ENCODE measurements at regions of chr2 and their contacts with region 1.

Region 1: DNA sequence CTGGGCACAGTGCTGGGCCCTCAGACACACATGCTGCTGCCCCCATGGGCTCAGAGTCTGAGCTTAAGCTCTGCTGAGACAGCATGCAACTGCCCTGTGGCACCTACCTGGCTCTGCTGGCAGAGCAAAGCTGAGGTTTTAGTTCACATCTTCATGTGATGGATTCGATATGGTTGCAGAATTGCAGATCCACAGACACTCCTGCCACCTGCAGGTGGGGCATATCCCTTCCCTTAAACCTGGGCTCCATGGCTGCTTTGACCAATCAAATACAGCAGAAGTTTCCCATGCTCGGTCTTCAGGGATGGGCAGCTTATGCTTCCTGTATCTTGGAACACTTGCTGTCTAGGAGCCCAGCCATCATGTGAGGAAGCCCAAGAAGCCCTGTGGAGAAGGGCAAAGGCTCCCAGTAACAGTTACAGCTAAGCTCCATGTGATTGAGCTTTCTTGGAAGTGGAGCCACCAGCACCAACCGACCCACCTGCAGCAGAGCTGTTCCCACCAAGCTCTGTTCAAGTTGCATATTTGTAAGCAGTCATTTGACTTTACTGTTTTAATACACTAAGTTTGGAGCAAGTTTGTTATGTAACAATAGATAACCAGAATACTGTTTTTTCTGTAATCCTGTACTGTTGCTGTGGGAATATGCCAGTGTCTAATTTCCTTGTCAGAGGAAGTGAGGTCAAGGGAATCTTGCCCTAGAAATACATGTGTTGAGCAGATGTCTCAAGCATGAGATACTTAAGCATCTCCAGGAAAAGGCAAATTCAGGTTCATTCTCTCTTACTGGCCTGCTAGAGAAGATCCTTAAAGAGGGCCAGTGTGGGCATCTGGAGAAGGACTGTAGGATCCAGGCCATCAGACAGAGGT is 79.3 kb downstream of the SH3RF3 start:
- DNase-seq: peak; percentile 25
- ATAC-seq: peak; percentile 76
- H3K4me3 Mint-ChIP-seq: no peak overlapping the region
- H3K27ac Mint-ChIP-seq: no peak overlapping the region
- H3K4me1 Mint-ChIP-seq: peaks cover 20% of the 10 kb centered on the region
- H3K27me3 Mint-ChIP-seq: no peaks in the 10 kb centered on the region; the same call in 1 of the 2 replicates
- CTCF ChIP-seq: no peak

Region 2: DNA sequence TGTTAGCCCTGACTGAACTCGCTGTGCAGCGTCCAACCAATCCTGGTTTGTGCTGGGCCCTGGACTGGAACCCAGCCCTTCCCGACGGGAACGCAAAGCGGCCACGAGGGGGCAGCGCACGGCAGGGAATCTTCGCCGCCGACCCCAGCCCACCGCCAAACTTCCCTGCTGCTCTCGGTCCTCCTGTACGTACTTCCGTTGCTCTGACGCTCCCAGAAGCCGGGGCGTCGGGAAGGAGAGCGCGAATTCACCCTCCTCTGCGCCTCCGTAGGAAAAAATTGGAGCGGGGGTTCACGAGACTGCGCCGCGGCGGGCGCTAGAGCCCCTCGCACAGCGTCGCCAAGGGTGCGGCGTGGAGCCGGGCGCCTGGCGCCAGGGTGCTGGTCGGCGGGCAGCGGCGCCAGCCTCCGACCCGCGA is 80.3 kb before region 1 on chr2:
- CTCF ChIA-PET with region 1: interaction called, 10 read pairs
- POLR2A ChIA-PET with region 1: no interaction called
- DNase-seq: peak; percentile 86
- ATAC-seq: peak; percentile 83
- H3K4me3 Mint-ChIP-seq: peak overlapping the region; percentile 61
- H3K27ac Mint-ChIP-seq: no peak overlapping the region
- H3K4me1 Mint-ChIP-seq: peaks cover 16% of the 10 kb centered on the region
- H3K27me3 Mint-ChIP-seq: peaks cover 63% of the 10 kb centered on the region
- CTCF ChIP-seq: peak; percentile 71

Region 3: DNA sequence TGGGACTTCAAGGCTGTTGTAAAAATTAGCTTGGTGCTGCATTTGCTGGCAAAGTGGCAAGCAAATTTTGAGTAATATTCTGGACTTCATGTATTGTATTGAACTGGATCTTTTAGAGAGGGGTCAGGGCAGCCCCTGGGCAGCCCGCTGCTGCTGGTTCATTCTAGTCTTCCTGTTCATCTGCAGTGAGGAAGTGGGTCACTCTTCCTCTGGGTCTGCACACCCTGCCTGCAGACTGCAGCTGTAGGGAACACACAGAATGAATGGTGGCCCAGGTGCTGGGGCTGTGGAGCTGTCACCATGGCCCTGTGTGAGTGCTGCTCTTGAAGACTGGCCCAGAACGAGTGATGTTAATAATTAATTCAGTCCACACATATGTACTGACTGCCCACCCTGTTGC is 69.9 kb before region 1 on chr2:
- CTCF ChIA-PET with region 1: no interaction called
- POLR2A ChIA-PET with region 1: no interaction called
- DNase-seq: no peak
- ATAC-seq: no peak
- H3K4me3 Mint-ChIP-seq: no peak overlapping the region
- H3K27ac Mint-ChIP-seq: no peak overlapping the region
- H3K4me1 Mint-ChIP-seq: peaks cover 6% of the 10 kb centered on the region
- H3K27me3 Mint-ChIP-seq: no peaks in the 10 kb centered on the region
- CTCF ChIP-seq: no peak